Activated CD4-positive, alpha-beta memory T cell treated with anti-CD3 and anti-CD28 coated beads for 36 hours (primary cell): ENCODE measurements at regions of chr9 and their contacts with region 1.

Region 1: GRCh38 chr9:89549031-89549644 is 51.2 kb upstream of the SEMA4D start:
- DNase-seq: peak; percentile 92
- H3K4me3 Mint-ChIP-seq: no peak overlapping the region
- H3K27ac Mint-ChIP-seq: peak overlapping the region; percentile 67
- H3K4me1 Mint-ChIP-seq: peaks cover 19% of the 10 kb centered on the region
- H3K27me3 Mint-ChIP-seq: no peaks in the 10 kb centered on the region

Region 2: DNA sequence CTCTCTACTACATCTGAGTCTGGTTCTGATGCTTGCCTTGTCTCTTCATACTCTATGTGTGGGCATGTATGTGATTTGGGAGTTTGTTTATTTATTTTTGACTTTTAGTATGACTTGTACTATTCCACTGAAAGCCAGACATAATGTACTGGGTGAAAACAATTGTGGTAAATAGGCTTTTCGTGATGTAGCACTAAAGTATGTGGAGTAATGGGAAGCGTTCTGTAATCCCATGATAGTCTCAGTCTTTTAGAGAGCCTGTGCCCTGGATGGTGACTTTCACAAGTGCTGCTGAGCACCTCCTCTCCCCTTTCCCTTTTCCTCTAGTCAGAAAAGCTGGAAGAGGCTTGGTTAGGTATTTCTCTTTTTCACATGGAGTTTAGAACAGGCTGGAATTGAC is 643.6 kb before region 1 on chr9:
- CTCF ChIA-PET with region 1: no interaction called
- POLR2A ChIA-PET with region 1: no interaction called
- intact Hi-C with region 1: no loop called
- DNase-seq: no peak
- H3K4me3 Mint-ChIP-seq: no peak overlapping the region
- H3K27ac Mint-ChIP-seq: no peak overlapping the region
- H3K4me1 Mint-ChIP-seq: no peaks in the 10 kb centered on the region
- H3K27me3 Mint-ChIP-seq: peaks cover 38% of the 10 kb centered on the region

Region 3: GRCh38 chr9:89358985-89359384 is 190.2 kb before region 1 on chr9:
- CTCF ChIA-PET with region 1: no interaction called
- POLR2A ChIA-PET with region 1: no interaction called
- intact Hi-C with region 1: no loop called
- DNase-seq: no peak
- H3K4me3 Mint-ChIP-seq: no peak overlapping the region
- H3K27ac Mint-ChIP-seq: no peak overlapping the region
- H3K4me1 Mint-ChIP-seq: peaks cover 15% of the 10 kb centered on the region
- H3K27me3 Mint-ChIP-seq: no peaks in the 10 kb centered on the region

Region 4: DNA sequence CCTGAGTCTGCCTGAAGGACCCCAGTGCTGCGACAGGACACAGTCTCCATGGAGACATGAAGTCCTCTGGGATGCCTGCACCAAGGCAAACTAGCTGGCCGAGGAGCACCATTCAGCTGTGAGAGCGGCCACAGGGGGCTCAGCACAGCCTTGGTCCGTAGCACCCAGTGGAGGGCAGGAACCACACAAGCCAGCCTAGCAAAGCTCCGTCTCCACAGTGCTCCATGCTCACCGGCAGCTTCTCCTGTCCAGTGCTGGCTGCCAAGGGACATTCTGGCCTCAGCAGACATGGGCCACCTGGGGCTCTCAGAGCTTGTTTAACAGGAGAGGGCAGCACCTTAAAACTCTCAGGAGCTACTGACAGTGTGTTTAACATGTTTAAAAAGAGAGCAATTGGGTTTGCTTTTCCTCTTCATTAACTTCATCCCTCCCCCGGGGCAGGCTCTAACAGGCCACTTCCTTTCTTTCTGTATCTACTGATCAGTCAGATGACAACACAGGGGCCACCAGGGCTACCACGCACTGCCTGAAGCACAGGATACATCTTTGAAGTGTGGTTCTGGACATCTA is 173.9 kb before region 1 on chr9:
- CTCF ChIA-PET with region 1: interaction called, 12 read pairs
- POLR2A ChIA-PET with region 1: interaction called, 3 read pairs
- intact Hi-C with region 1: no loop called
- DNase-seq: peak; percentile 49
- H3K4me3 Mint-ChIP-seq: no peak overlapping the region
- H3K27ac Mint-ChIP-seq: peak overlapping the region; percentile 64
- H3K4me1 Mint-ChIP-seq: peaks cover 27% of the 10 kb centered on the region
- H3K27me3 Mint-ChIP-seq: no peaks in the 10 kb centered on the region

Region 5: GRCh38 chr9:89428901-89429890 is 119.9 kb before region 1 on chr9:
- CTCF ChIA-PET with region 1: interaction called, 120 read pairs
- POLR2A ChIA-PET with region 1: interaction called, 3 read pairs
- intact Hi-C with region 1: loop called (anchors 1 kb)
- DNase-seq: peak; percentile 76
- H3K4me3 Mint-ChIP-seq: no peak overlapping the region
- H3K27ac Mint-ChIP-seq: peak overlapping the region; percentile 100
- H3K4me1 Mint-ChIP-seq: peaks cover 87% of the 10 kb centered on the region
- H3K27me3 Mint-ChIP-seq: no peaks in the 10 kb centered on the region

Region 6: GRCh38 chr9:89461265-89461664 is 87.9 kb before region 1 on chr9:
- CTCF ChIA-PET with region 1: interaction called, 29 read pairs
- POLR2A ChIA-PET with region 1: no interaction called
- intact Hi-C with region 1: no loop called
- DNase-seq: peak; percentile 77
- H3K4me3 Mint-ChIP-seq: no peak overlapping the region
- H3K27ac Mint-ChIP-seq: peak overlapping the region; percentile 6
- H3K4me1 Mint-ChIP-seq: peaks cover 97% of the 10 kb centered on the region
- H3K27me3 Mint-ChIP-seq: no peaks in the 10 kb centered on the region

Region 7: GRCh38 chr9:89489548-89490530 is 59.3 kb before region 1 on chr9:
- CTCF ChIA-PET with region 1: interaction called, 25 read pairs
- POLR2A ChIA-PET with region 1: interaction called, 6 read pairs
- intact Hi-C with region 1: no loop called
- DNase-seq: peak; percentile 9
- H3K4me3 Mint-ChIP-seq: peak overlapping the region; percentile 39
- H3K27ac Mint-ChIP-seq: peak overlapping the region; percentile 70
- H3K4me1 Mint-ChIP-seq: peaks cover 94% of the 10 kb centered on the region
- H3K27me3 Mint-ChIP-seq: no peaks in the 10 kb centered on the region

Region 8: GRCh38 chr9:89529243-89530035 is 19.7 kb before region 1 on chr9:
- CTCF ChIA-PET with region 1: interaction called, 35 read pairs
- POLR2A ChIA-PET with region 1: no interaction called
- intact Hi-C with region 1: no loop called
- DNase-seq: no peak
- H3K4me3 Mint-ChIP-seq: no peak overlapping the region
- H3K27ac Mint-ChIP-seq: peak overlapping the region; percentile 39
- H3K4me1 Mint-ChIP-seq: peaks cover 93% of the 10 kb centered on the region
- H3K27me3 Mint-ChIP-seq: no peaks in the 10 kb centered on the region